Heart left ventricle (tissue), 16 donors: ENCODE measurements at regions of chr1 and their contacts with region 1.

Region 1: GRCh38 chr1:17011439-17012307 is at the start of gene ATP13A2:
- DNase-seq: peak; percentile 79 to 91 (median 81)
- ATAC-seq: peak; percentile 89 to 95 (median 92)
- H3K4me3 ChIP-seq: peak within 1 kb of the TSS; percentile 67 to 98 (median 85)
- H3K27ac ChIP-seq: peak within 1 kb of the TSS in 11 of 12 donors; percentile 42 to 79 (median 60)
- H3K4me1 ChIP-seq: peaks cover 0 to 43% (median 23%) of the 10 kb centered on the region in 12 donors
- H3K27me3 ChIP-seq: no peaks in the 10 kb centered on the region
- CTCF ChIP-seq: no peak
- POLR2A ChIP-seq: peak in 1 of 2 donors; percentile 50
- total RNA-seq, gene ATP13A2: 7.3 to 37.2 (median 15.6) TPM

Region 2: DNA sequence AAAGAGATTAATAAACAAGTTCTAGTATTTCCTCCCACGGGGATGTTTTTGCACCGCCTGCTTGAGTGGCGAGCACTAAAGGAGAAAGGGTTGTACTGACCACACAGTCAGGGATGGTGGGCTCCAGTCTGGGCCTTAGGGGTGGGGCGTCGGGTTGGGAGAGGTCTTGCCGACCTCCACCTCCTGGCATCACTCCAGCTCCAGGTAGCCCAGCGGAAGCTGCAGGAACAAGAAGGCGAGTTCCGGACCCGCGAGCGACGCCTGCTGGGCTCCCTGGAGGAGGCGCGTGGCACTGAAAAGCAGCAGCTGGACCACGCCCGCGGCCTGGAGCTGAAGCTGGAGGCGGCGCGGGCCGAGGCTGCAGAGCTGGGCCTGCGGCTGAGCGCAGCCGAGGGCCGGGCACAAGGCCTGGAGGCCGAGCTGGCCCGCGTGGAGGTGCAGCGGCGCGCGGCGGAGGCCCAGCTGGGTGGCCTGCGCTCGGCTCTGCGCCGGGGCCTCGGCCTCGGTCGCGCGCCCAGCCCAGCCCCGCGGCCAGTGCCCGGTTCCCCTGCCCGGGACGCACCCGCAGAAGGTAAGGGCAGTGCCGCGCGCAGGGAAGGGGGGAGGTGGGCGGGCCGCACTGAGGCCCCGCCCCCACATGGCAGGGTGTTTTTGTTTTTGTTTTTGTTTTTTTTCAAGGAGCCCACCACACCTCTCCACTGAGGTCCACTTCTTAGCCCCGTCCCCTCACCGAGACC is 50.9 kb before region 1 on chr1:
- intact Hi-C with region 1: loop called in 3 of 10 experiments (anchors 5 to 10 kb)
- DNase-seq: peak; percentile 79 to 88 (median 86)
- ATAC-seq: peak; percentile 41 to 91 (median 78)
- H3K4me3 ChIP-seq: peak overlapping the region in 10 of 12 donors; percentile 22 to 58 (median 48)
- H3K27ac ChIP-seq: peak overlapping the region in 4 of 12 donors; percentile 27 to 59 (median 41)
- H3K4me1 ChIP-seq: peaks cover 0 to 15% (median 2%) of the 10 kb centered on the region in 12 donors
- H3K27me3 ChIP-seq: no peaks in the 10 kb centered on the region
- CTCF ChIP-seq: peak; percentile 13 to 74 (median 60)
- POLR2A ChIP-seq: no peak

Region 3: GRCh38 chr1:16967095-16967575 is 44.5 kb before region 1 on chr1:
- intact Hi-C with region 1: loop called in 3 of 10 experiments (anchors 5 to 10 kb)
- DNase-seq: peak; percentile 68 to 84 (median 77)
- ATAC-seq: peak; percentile 44 to 83 (median 69)
- H3K4me3 ChIP-seq: no peak overlapping the region
- H3K27ac ChIP-seq: peak overlapping the region in 5 of 12 donors; percentile 2 to 34 (median 22)
- H3K4me1 ChIP-seq: peaks cover 0 to 18% (median 10%) of the 10 kb centered on the region in 12 donors
- H3K27me3 ChIP-seq: no peaks in the 10 kb centered on the region
- CTCF ChIP-seq: no peak
- POLR2A ChIP-seq: no peak

Region 4: DNA sequence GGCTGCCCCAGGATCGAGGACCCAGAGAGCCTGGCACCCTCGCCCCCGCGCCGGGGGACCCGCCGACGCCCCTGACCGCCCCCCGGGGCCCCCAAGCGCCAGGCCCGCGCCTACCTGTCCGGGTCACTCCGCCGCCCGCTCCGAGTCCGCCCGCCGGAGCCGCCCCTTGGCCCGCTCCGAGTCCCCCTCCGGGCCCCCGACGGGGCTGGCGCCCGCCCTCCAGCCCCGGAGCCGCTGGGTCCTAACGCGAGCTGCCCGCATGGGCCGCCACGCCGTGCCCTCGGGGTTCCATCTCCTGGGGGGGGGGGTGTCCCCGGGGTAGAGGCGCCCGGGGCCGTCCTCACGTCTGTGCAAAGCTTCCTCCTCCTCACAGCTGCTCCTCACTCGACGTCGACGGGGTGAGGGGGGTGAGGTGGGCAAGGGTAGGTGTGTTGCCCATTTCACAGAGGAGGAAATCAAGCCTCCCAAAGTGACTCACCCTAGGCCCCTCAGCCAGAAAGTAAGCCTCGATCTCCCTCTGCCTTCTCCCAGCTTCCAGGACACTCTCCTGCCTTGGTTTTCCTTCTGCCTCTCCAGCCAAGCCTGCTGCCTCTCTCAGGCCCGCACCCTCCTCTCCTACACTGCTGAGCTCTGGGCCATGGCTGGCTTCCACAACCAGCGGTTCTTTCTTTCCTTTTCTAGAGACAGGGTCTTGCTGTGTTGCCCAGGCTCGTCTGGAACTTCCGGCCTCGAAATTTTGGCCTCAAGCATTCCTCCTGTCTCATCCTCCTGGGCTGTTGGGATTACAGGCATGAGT is 31.0 kb before region 1 on chr1 and contains the start of gene MFAP2:
- intact Hi-C with region 1: loop called in 1 of 10 experiments (anchors 2 kb)
- DNase-seq: peak in 1 of 5 donors; percentile 43
- ATAC-seq: peak in 2 of 4 donors; percentile 16 to 21
- H3K4me3 ChIP-seq: peak within 1 kb of the TSS; percentile 3 to 65 (median 48)
- H3K27ac ChIP-seq: peak within 1 kb of the TSS in 9 of 12 donors; percentile 8 to 77 (median 47)
- H3K4me1 ChIP-seq: peaks cover 0 to 29% (median 17%) of the 10 kb centered on the region in 12 donors
- H3K27me3 ChIP-seq: peaks cover 0 to 23% (median 0%) of the 10 kb centered on the region in 9 donors
- CTCF ChIP-seq: no peak
- POLR2A ChIP-seq: no peak
- total RNA-seq, gene MFAP2: 1.2 to 13.0 (median 2.3) TPM

Region 5: DNA sequence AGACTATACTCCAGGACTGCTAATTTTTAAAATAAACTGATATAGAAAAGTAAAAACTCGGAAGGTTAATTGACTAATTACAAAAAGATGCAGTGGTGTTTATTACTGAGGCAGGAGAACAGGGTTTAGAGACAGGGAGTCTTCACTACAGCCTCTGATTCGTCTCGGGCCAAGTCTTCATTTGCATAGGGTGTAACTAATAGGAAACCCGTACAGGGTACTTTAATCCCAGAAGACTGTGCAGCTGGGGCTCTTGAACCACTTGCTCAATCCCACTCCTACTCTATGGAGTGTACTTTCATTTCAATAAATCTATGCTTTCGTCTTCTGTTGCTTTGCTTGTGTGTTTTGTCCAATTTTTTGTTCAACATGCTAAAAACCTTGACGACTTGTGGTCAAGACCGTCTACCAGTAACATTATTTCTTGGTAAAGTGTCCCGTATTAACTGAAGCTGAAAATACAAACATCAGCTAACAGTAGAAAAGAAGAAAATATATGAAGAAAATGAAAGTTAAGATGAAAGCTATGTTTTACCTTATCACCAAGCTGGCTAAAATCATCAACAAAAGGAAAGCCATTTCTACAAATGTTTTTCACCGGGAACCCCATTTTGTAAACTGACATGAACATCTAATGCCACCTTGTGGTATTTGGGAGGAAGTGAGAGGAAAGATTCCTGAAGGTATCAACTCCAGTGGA is 34.1 kb after region 1 on chr1:
- intact Hi-C with region 1: loop called in 4 of 10 experiments (anchors 5 kb)
- DNase-seq: no peak
- ATAC-seq: peak; percentile 40 to 76 (median 62)
- H3K4me3 ChIP-seq: peak overlapping the region in 8 of 12 donors; percentile 9 to 40 (median 22)
- H3K27ac ChIP-seq: peak overlapping the region in 4 of 12 donors; percentile 12 to 45 (median 26)
- H3K4me1 ChIP-seq: peaks cover 0 to 30% (median 10%) of the 10 kb centered on the region in 12 donors
- H3K27me3 ChIP-seq: no peaks in the 10 kb centered on the region
- CTCF ChIP-seq: peak; percentile 61 to 83 (median 76)
- POLR2A ChIP-seq: no peak

Region 6: DNA sequence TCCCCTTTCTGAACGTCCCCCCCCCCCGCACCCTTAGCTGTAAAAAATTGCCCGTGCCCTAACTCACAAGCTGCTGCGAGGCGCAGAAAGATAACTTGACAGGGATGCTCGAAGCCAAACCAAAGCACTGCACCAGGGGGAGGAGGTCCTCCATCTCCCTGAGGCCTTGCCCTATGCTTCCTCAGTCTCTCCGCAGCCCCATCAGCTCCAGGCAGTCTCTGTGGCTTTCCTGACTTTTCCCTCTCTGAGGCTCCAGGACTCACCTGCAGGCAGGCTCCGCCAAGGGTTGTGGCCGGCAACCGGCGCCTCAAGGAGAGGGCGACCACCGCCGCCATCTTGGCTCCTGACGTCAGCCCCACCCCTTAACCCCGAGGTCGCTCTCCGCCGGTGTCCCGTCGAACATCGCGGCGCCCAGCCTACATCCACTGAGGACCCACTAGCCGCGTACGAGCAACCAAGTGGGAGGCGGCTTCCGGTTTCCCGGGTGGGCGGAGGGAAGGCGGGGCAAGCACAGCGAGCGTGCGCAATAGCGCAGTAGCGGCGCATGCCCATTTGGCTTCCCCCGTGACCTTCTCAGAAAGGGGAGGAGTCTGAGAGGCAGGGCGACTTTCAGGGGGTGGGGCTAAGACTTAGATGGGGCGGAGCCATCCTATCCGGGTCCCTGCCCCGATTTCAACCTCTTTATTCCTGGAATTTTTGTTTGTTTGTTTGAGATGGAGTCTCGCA is 42.2 kb after region 1 on chr1 and contains the start of gene SDHB:
- intact Hi-C with region 1: loop called in 4 of 10 experiments (anchors 5 kb)
- DNase-seq: peak; percentile 98 to 100 (median 99)
- ATAC-seq: peak; percentile 97 to 99 (median 99)
- H3K4me3 ChIP-seq: peak within 1 kb of the TSS; percentile 28 to 99 (median 77)
- H3K27ac ChIP-seq: peak within 1 kb of the TSS; percentile 68 to 95 (median 84)
- H3K4me1 ChIP-seq: peaks cover 0 to 32% (median 22%) of the 10 kb centered on the region in 12 donors
- H3K27me3 ChIP-seq: no peaks in the 10 kb centered on the region
- CTCF ChIP-seq: no peak
- POLR2A ChIP-seq: peak; percentile 74 to 90
- total RNA-seq, gene SDHB: 226 to 617 (median 341) TPM